Naive thymus-derived CD4-positive, alpha-beta T cell (primary cell): ENCODE measurements at regions of chr11 and their contacts with region 1.

Region 1: GRCh38 chr11:61041755-61042518 is 60.4 kb upstream of the CD5 start:
- DNase-seq: peak; percentile 60 to 97 (median 96)
- ATAC-seq: peak; percentile 98
- H3K4me3 ChIP-seq: peak overlapping the region; percentile 20
- H3K4me3 Mint-ChIP-seq: peak overlapping the region; percentile 70 to 85 (median 76)
- H3K27ac ChIP-seq: peak overlapping the region; percentile 81
- H3K27ac Mint-ChIP-seq: peak overlapping the region; percentile 96 to 100 (median 98)
- H3K4me1 ChIP-seq: peaks cover 22 to 49% of the 10 kb centered on the region in 2 donors
- H3K4me1 Mint-ChIP-seq: peaks cover 40 to 70% (median 59%) of the 10 kb centered on the region in 7 donors
- H3K27me3 ChIP-seq: no peaks in the 10 kb centered on the region
- H3K27me3 Mint-ChIP-seq: no peaks in the 10 kb centered on the region

Region 2: DNA sequence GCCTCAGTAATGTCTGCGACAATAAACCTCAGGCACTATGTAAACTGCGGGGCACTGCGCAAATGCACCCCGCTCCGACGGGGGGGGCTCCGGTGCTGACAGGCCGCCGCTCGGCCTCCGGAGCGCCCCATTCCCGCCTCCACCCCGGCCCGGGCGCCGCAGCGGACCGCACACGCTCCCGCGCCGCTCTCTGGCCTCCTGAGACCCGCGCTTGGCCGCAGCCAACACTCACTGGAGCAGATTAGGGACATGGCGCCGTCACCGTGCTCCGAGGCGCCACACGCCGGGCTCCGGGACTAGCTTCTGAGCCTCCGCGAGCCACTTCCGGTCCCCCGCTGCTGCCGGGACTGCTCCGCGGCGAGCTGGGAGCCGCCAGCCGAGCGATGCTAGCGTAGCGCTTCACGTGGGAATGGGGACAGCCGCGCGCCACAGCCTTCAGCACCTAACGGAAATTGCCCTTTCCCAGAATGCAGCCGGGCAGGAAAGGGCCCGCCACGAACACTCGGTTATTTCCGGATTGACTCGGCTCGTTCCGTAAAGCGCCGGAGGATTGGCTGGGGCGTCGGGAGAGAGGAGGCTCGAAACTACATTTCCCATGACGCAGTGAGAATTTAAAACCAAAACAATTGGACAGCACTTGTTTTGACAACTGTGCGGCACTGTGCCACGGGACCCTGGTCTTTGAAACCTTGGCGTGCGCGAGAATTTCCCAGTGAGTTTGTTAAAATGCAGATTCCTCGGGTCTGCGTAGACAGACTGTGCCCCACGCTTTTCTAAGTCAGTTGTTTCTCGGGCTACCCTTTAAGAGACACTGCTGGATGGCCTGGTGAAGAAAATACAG is 135.6 kb before region 1 on chr11 and contains the start of gene PRPF19:
- CTCF ChIA-PET with region 1: interaction called, 3 read pairs
- POLR2A ChIA-PET with region 1: interaction called, 3 read pairs
- intact Hi-C with region 1: loop called in 1 of 2 experiments (anchors 1 kb)
- DNase-seq: peak; percentile 98 to 100 (median 99)
- ATAC-seq: peak; percentile 96
- H3K4me3 ChIP-seq: peak within 1 kb of the TSS; percentile 89
- H3K4me3 Mint-ChIP-seq: peak within 1 kb of the TSS; percentile 84 to 95 (median 91)
- H3K27ac ChIP-seq: peak within 1 kb of the TSS; percentile 88
- H3K27ac Mint-ChIP-seq: peak within 1 kb of the TSS; percentile 95 to 100 (median 98)
- H3K4me1 ChIP-seq: peaks cover 22 to 26% of the 10 kb centered on the region in 2 donors
- H3K4me1 Mint-ChIP-seq: peaks cover 34 to 69% (median 58%) of the 10 kb centered on the region in 7 donors
- H3K27me3 ChIP-seq: no peaks in the 10 kb centered on the region
- H3K27me3 Mint-ChIP-seq: peaks cover 0 to 11% (median 0%) of the 10 kb centered on the region in 5 donors
- total RNA-seq, gene PRPF19: 72.8 to 139 (median 85.6) TPM

Region 3: DNA sequence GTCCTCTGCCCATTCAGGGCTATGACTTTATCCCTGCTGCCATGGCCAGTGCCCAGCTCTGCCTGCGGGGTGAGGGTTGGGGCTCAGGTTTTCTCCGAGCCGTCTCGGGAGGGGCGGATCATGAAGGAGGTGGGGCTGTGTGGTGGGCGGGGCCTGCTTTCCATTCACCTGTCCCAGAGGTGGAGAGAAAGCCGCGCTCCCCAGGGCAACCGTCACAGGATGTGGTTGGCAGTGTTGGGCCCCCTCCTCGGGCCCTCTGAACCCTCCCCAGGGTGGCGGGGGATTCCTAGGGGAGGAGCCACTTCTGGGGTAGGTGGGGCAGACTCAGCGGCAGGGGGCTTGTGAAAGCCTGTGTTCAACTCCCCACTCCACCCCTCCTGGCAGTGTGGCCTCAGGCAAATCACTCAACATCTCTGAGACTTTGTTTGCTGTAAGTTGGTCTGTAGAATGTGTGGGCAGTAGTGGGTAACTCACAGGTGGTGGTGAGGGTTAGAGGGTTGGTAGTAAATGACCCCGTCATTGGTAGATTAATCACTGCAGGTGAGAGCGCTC is 20.2 kb before region 1 on chr11:
- CTCF ChIA-PET with region 1: interaction called, 20 read pairs
- POLR2A ChIA-PET with region 1: interaction called, 210 read pairs
- intact Hi-C with region 1: loop called (anchors 1 kb)
- DNase-seq: peak; percentile 72 to 98 (median 96)
- ATAC-seq: peak; percentile 91
- H3K4me3 ChIP-seq: peak overlapping the region; percentile 53
- H3K4me3 Mint-ChIP-seq: peak overlapping the region; percentile 68 to 90 (median 81)
- H3K27ac ChIP-seq: peak overlapping the region; percentile 82
- H3K27ac Mint-ChIP-seq: peak overlapping the region; percentile 88 to 100 (median 98)
- H3K4me1 ChIP-seq: peaks cover 49 to 56% of the 10 kb centered on the region in 2 donors
- H3K4me1 Mint-ChIP-seq: peaks cover 40 to 79% (median 76%) of the 10 kb centered on the region in 7 donors
- H3K27me3 ChIP-seq: no peaks in the 10 kb centered on the region
- H3K27me3 Mint-ChIP-seq: no peaks in the 10 kb centered on the region

Region 4: DNA sequence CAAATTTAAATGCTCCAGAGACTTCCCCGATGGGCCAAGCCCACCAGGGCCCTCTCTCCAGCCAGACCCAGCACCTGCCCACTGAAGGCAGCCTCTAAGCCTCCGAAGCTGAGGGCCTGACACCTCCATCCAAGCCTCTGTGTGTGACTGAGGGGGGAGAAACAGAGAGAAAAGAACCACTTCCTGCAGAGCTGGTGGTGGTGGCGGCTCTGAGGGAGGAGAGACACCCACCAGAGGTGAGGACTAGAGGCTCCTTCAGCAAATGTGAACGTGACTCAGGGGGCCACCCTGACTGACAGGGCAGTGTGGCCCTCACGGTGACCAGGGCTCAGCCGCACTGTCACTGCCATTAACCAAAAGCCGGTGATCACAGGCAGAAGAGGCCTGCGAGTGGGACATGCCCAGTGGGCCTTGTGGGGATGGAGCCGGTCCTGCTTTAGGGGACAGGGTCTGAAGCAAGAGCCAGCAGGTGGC is 29.3 kb after region 1 on chr11:
- CTCF ChIA-PET with region 1: interaction called, 6 read pairs
- POLR2A ChIA-PET with region 1: interaction called, 222 read pairs
- intact Hi-C with region 1: loop called in 1 of 2 experiments (anchors 1 kb)
- DNase-seq: peak in 8 of 9 donors; percentile 56 to 78 (median 71)
- ATAC-seq: peak; percentile 96
- H3K4me3 ChIP-seq: peak overlapping the region; percentile 21
- H3K4me3 Mint-ChIP-seq: peak overlapping the region; percentile 65 to 87 (median 76)
- H3K27ac ChIP-seq: peak overlapping the region; percentile 76
- H3K27ac Mint-ChIP-seq: peak overlapping the region; percentile 92 to 97 (median 97)
- H3K4me1 ChIP-seq: peaks cover 41 to 81% of the 10 kb centered on the region in 2 donors
- H3K4me1 Mint-ChIP-seq: peaks cover 69 to 99% (median 91%) of the 10 kb centered on the region in 7 donors
- H3K27me3 ChIP-seq: no peaks in the 10 kb centered on the region
- H3K27me3 Mint-ChIP-seq: peaks cover 0 to 4% (median 0%) of the 10 kb centered on the region in 5 donors

Region 5: DNA sequence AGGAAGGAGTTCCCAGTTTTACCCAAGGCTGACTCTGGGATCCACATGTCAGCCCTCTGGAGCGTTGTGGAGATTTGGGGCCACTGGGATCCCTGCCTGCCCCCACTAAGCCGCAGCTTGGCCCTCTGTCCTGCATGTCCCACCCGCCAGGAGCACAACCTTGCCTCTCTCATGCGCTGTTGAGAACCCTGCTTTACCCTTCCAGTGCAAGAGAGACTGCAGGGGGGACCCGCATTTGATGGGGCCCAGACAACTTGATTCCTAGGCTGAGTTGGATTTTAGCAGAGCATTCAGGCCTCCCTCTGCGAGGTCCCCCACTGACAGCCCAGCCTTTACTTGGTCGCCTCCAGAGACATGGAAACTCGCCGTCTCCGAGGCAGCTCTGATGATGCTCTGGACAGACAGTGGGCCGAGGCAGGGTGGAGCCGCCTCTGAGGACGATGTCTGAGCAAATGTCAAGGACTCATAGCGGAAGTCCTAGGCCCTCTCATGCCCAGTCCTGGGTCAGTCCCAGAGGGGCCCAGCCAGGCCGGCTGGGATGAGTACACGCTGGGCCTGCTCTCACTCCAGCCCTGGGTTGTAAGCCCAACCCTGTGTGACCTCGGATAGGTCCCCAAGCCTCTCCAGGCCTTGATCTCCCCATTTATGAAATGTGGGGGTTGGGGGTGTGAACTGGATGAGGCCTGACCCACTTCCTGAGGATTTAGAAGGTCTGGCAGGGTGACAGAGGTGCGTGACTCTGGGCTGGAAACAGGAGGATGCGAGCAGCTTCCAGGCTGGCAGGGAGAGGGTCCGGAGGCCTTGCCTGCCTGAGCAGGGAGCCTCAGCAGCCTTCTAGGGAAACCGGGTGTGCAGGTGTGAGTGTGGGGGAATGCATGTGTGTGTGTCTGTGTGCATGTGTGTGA is 61.0 kb after region 1 on chr11:
- CTCF ChIA-PET with region 1: interaction called, 5 read pairs
- POLR2A ChIA-PET with region 1: interaction called, 8 read pairs
- intact Hi-C with region 1: loop called in 1 of 2 experiments (anchors 1 kb)
- DNase-seq: peak in 3 of 9 donors; percentile 39 to 47 (median 40)
- ATAC-seq: peak; percentile 28
- H3K4me3 ChIP-seq: peak overlapping the region; percentile 100
- H3K4me3 Mint-ChIP-seq: peak overlapping the region in 1 of 10 donors; percentile 97
- H3K27ac ChIP-seq: peak overlapping the region; percentile 98
- H3K27ac Mint-ChIP-seq: no peak overlapping the region
- H3K4me1 ChIP-seq: peaks cover 39 to 46% of the 10 kb centered on the region in 2 donors
- H3K4me1 Mint-ChIP-seq: peaks cover 17 to 48% (median 40%) of the 10 kb centered on the region in 7 donors
- H3K27me3 ChIP-seq: no peaks in the 10 kb centered on the region
- H3K27me3 Mint-ChIP-seq: no peaks in the 10 kb centered on the region